ENCODE measurements at regions of chr13 and their contacts with region 1.

Region 1: DNA sequence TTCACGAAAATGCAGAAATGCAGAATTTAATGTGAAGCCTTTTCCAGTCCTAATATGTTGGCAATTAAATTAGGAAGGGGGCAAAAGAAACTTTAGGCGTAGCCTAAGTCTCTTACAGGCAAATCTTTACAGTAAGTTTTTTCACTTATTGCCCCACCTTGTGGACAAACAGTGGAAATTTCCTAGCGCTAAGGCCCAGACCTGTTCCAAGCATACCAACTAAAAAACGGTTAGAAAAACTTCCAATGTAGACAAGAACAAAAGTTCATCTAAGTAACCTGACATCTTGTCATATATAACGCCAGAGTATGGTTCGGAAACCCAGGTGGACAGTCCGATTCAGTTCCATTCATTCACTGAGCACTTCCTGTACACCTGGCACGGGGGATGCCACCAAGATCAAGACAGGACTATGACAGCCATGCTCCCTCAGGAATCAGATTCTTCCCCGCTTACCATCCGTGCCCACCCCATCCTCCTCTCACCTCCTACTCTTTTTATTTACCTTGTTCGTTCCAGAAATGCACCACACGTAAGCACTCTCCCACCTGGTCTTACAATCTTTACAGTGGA is 4.9 kb downstream of the ZAR1L start:
- DNase-seq: peak; percentile 21
- H3K4me3 Mint-ChIP-seq: no peak overlapping the region
- H3K27ac Mint-ChIP-seq: no peak overlapping the region
- H3K4me1 Mint-ChIP-seq: no peaks in the 10 kb centered on the region
- H3K27me3 Mint-ChIP-seq: no peaks in the 10 kb centered on the region
- CTCF ChIP-seq: peak; percentile 50

Region 2: DNA sequence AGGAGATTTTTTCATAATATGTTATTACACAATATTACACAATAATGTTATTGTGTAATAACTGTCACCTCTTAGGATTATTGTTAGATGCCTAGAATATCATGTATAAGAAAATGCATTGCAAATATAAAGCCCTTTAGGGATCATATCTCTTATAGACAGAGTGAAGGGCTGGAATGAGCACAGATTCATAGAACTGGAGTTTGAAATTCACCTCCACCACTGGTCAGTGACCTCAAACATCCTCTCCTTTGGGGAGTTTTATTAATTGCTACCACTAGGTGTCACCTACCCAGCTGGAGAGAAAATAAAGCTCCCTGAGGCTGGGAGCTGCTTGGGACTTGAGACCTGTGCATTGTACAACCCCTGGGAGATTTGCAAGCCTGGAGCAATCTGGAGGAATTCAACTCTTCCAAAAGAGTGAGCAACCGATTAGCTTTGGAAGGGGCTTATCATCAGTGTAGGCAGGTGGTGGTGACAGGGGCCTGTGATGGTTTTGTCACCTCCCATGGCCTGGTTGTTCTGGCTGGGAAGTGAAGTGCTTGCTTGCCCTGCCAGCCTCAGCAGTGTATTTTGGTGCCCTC is 308.9 kb before region 1 on chr13:
- CTCF ChIA-PET with region 1: no interaction called
- intact Hi-C with region 1: no loop called
- DNase-seq: peak; percentile 21
- H3K4me3 Mint-ChIP-seq: no peak overlapping the region
- H3K27ac Mint-ChIP-seq: no peak overlapping the region
- H3K4me1 Mint-ChIP-seq: peaks cover 16% of the 10 kb centered on the region
- H3K27me3 Mint-ChIP-seq: no peaks in the 10 kb centered on the region
- CTCF ChIP-seq: peak; percentile 41

Region 3: GRCh38 chr13:32019612-32020233 is 290.5 kb before region 1 on chr13:
- CTCF ChIA-PET with region 1: no interaction called
- intact Hi-C with region 1: loop called (anchors 1 kb)
- DNase-seq: peak; percentile 40
- H3K4me3 Mint-ChIP-seq: no peak overlapping the region
- H3K27ac Mint-ChIP-seq: no peak overlapping the region
- H3K4me1 Mint-ChIP-seq: no peaks in the 10 kb centered on the region
- H3K27me3 Mint-ChIP-seq: no peaks in the 10 kb centered on the region
- CTCF ChIP-seq: no peak

Region 4: GRCh38 chr13:32135655-32136054 is 174.6 kb before region 1 on chr13:
- CTCF ChIA-PET with region 1: no interaction called
- intact Hi-C with region 1: no loop called
- DNase-seq: no peak
- H3K4me3 Mint-ChIP-seq: no peak overlapping the region
- H3K27ac Mint-ChIP-seq: no peak overlapping the region
- H3K4me1 Mint-ChIP-seq: no peaks in the 10 kb centered on the region
- H3K27me3 Mint-ChIP-seq: no peaks in the 10 kb centered on the region
- CTCF ChIP-seq: no peak

Region 5: GRCh38 chr13:32225481-32225931 is 84.7 kb before region 1 on chr13:
- CTCF ChIA-PET with region 1: no interaction called
- intact Hi-C with region 1: no loop called
- DNase-seq: no peak
- H3K4me3 Mint-ChIP-seq: no peak overlapping the region
- H3K27ac Mint-ChIP-seq: no peak overlapping the region
- H3K4me1 Mint-ChIP-seq: no peaks in the 10 kb centered on the region
- H3K27me3 Mint-ChIP-seq: no peaks in the 10 kb centered on the region
- CTCF ChIP-seq: no peak

Region 6: DNA sequence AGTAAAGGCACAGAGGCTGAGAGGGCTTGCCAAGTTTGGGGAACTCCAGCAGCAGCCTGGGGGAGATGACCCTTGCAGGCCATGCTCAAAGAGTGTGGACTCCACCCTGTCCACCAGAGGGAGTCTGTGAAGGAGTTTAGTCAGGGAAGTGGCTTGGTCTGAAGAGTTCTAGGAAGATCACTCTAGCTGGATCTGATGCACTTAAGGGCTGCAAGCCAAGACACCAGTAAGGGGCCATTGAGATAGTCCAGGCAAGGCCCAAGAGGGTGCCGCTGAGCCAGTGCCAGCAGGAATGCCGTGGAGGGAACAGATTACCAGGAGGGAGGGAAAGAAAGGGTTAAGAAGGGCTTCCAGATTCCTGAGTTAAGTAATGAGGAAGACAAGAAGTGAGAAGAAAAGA is 63.8 kb before region 1 on chr13:
- CTCF ChIA-PET with region 1: no interaction called
- intact Hi-C with region 1: loop called (anchors 2 kb)
- DNase-seq: peak; percentile 60
- H3K4me3 Mint-ChIP-seq: no peak overlapping the region
- H3K27ac Mint-ChIP-seq: no peak overlapping the region
- H3K4me1 Mint-ChIP-seq: peaks cover 8% of the 10 kb centered on the region
- H3K27me3 Mint-ChIP-seq: no peaks in the 10 kb centered on the region
- CTCF ChIP-seq: peak; percentile 47

Region 7: DNA sequence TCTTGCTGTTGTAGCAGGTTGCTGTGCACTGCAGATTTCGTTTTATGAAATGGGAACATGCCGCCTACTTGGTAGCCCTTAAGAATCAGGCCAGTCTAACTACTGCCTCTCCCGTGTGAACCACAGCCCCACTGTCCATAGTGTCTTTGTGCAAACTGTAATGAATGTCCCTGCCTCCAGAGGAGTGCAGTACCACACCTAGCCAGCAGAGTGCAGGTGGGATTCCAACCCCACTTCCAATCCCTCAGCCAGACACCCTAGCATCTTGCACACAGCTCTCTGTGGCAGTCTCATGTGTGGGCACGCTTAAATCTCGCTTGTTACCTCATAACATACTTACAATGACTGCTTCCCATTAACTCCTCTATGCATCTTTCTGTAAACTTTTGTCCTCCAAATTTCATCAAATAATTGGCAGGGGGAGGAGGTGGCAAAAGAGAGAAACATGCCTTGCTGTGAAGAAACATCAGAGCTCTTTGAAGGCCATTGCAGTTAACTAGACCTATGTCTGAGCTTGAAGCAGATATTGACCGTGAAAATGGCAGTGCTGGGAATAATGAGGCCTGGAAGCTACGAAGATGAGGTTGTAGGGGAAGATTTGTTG is 42.3 kb before region 1 on chr13:
- CTCF ChIA-PET with region 1: no interaction called
- intact Hi-C with region 1: loop called (anchors 2 kb)
- DNase-seq: peak; percentile 68
- H3K4me3 Mint-ChIP-seq: no peak overlapping the region
- H3K27ac Mint-ChIP-seq: no peak overlapping the region
- H3K4me1 Mint-ChIP-seq: no peaks in the 10 kb centered on the region
- H3K27me3 Mint-ChIP-seq: no peaks in the 10 kb centered on the region
- CTCF ChIP-seq: peak; percentile 81

Region 8: GRCh38 chr13:32297206-32297605 is 13.0 kb before region 1 on chr13:
- CTCF ChIA-PET with region 1: no interaction called
- intact Hi-C with region 1: no loop called
- DNase-seq: no peak
- H3K4me3 Mint-ChIP-seq: no peak overlapping the region
- H3K27ac Mint-ChIP-seq: no peak overlapping the region
- H3K4me1 Mint-ChIP-seq: no peaks in the 10 kb centered on the region
- H3K27me3 Mint-ChIP-seq: no peaks in the 10 kb centered on the region
- CTCF ChIP-seq: no peak

Measured in Calu3 (cell line).